Activated T-helper 2 cell treated with anti-CD3 and anti-CD28 coated beads, Interferon-gamma antibody, Interleukin-2, Interleukin-4, amounts not matched to agents 10 μg/mL and 5 μg/mL and 100 μg/mL, durations not matched to agents 14 hours and 24 hours and 36 hours (primary cell): ENCODE measurements at regions of chr13 and their contacts with region 1.

Region 1: GRCh38 chr13:75876360-75877050 is 240.4 kb downstream of the LMO7 start:
- DNase-seq: peak; percentile 45
- H3K4me3 Mint-ChIP-seq: no peak overlapping the region
- H3K27ac Mint-ChIP-seq: no peak overlapping the region
- H3K4me1 Mint-ChIP-seq: peaks cover 22% of the 10 kb centered on the region
- H3K27me3 Mint-ChIP-seq: peaks cover 20% of the 10 kb centered on the region

Region 2: GRCh38 chr13:75803164-75803611 is 73.3 kb before region 1 on chr13:
- intact Hi-C with region 1: loop called (anchors 2 kb)
- DNase-seq: no peak
- H3K4me3 Mint-ChIP-seq: no peak overlapping the region
- H3K27ac Mint-ChIP-seq: no peak overlapping the region
- H3K4me1 Mint-ChIP-seq: peaks cover 46% of the 10 kb centered on the region
- H3K27me3 Mint-ChIP-seq: no peaks in the 10 kb centered on the region

Region 3: GRCh38 chr13:76016799-76017400 is 140.4 kb after region 1 on chr13:
- intact Hi-C with region 1: loop called (anchors 1 kb)
- DNase-seq: no peak
- H3K4me3 Mint-ChIP-seq: no peak overlapping the region
- H3K27ac Mint-ChIP-seq: no peak overlapping the region
- H3K4me1 Mint-ChIP-seq: no peaks in the 10 kb centered on the region
- H3K27me3 Mint-ChIP-seq: no peaks in the 10 kb centered on the region

Region 4: DNA sequence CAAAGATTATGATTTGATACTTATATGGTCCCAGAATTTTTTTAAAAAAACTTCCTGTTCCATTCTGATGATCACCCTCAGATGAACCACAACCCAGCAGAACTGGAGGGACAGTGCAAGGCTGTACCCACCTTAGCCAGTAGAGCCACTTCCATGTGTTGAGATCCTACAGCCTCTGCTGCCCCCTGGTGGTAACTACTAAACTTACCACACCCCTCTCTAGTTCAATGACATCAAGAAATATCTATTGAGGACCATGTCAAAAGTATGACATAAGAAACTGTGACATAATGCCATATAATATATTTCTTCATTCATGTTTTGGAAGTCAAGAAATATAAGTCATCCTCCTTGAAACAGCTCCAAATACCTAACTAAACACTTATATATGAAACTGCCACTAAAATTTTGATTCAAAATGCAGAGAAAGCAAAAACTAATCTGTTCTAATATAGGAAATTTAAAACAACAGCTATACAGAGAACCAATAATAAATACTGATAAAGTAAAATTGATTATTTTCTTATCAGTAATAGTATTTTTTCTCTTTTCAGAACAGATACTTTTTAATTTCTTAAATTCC is 597.1 kb after region 1 on chr13:
- intact Hi-C with region 1: loop called (anchors 1 kb)
- DNase-seq: peak; percentile 45
- H3K4me3 Mint-ChIP-seq: no peak overlapping the region
- H3K27ac Mint-ChIP-seq: no peak overlapping the region
- H3K4me1 Mint-ChIP-seq: no peaks in the 10 kb centered on the region
- H3K27me3 Mint-ChIP-seq: peaks cover 3% of the 10 kb centered on the region

Region 5: DNA sequence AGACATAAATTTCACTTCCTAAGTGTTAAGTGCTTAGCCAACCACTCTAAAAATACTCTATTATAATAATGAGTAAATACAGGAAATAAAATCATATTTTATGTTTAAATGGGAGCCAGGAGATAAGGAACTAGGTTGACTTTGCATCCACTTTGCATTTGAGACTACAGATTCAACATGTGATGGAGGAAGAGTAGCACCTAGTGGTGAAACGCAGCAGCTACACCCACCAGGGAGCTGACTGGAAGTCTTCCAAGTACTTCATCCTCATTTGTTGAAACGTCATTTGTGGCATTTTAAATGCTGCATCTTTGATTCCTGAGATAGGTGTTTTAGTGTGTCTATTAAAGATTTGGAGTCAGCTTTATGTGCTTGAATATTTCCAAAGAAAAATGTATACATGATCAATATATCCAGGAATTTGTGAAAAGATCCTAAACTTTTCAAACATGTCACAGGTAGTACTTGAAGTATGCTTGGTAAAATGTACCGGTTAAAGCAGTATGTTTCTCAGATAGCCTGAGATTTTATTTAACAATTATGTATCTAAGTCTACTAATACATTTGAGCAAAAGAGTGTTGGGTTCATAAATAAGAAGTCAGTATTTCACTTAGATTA is 1027.1 kb after region 1 on chr13:
- intact Hi-C with region 1: loop called (anchors 2 kb)
- DNase-seq: peak; percentile 50
- H3K4me3 Mint-ChIP-seq: no peak overlapping the region
- H3K27ac Mint-ChIP-seq: no peak overlapping the region
- H3K4me1 Mint-ChIP-seq: no peaks in the 10 kb centered on the region
- H3K27me3 Mint-ChIP-seq: peaks cover 21% of the 10 kb centered on the region